ENCODE measurements at regions of chr9 and their contacts with region 1.

Region 1: GRCh38 chr9:28774416-28775235 is 1201.3 kb upstream of the C9orf72 start:
- DNase-seq: peak; percentile 51

Region 2: GRCh38 chr9:28971881-28972280 is 197.3 kb after region 1 on chr9:
- in situ Hi-C with region 1: no loop called
- DNase-seq: no peak

Region 3: DNA sequence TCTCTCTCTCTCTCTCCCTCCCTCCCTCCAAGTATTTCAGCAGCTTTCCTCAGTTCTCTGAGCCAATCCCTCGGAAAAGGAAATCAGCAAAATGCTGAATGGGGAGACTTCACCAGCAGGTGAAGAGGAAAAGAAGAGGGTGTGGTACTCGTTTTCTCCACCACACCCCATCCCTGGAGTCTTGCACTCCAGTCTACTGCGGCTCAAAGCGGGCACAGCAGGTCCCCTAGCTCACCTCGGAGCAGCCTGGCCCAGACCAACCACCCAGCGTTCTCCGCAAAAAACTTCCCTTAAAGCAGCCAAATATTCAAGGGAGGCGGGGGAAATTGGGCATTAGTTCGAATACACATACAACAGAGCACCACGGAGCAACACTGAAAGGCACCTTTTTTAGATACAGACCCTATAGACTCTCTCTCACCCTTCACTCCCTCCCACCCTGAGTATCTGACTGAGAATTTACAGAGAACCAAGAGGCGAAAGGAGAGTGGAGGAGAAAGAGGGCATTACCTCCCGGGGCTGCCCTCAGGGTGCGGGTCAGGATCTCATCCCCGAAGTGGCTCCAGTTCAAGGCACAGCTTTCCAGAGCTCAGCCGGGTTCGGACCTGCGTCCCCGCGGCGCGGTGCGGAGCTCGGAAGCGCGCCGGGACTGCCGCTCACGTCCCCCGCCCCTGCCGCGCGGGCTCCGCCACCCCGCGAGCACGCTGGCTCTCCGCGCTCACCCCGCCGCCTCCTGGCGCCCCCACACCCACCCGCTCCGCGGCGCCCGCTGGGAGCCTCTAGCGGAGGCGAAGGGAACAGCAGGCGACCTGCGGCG is 437.2 kb after region 1 on chr9:
- in situ Hi-C with region 1: loop called (anchors 25 kb)
- DNase-seq: peak; percentile 78

Measured in KBM-7 (cell line).